Mammary epithelial cell (primary cell): ENCODE measurements at regions of chr7 and their contacts with region 1.

Region 1: DNA sequence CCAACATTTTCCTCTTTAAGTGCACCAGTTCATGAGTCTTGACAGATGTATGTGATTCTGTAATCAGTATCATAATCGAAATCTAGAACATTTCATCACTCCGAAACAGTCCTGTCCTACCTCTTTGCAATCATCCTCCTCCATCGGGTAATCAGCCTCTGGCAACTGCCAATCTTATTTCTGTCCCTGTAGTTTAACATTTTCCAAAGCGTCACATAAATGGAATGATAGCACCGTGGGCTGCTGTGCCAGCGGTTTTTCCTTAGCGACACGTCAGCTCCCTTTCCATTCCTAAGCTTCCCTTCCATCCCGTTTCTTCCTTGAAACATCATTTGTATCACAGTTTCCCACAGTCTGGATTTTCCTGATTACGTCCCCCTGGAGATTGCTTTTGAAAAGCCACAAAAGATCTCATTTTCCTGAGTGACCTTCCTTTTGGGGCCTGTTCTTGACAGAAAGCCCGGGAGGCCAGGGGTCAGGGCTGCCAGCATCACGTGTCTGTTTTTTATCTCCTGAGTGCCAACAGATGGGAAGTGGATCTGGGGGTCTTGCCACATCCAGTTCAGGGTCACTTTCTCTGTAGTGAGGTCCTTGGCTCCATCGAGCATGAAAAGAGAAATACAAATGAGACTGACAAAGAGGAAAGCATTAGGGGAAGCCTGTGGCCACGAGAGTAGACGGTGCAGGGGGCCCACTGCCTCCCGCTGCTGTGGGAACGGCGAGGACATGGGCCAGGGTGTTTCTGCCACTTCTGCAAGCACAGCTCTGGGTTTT is 31.6 kb downstream of the TMEM120A start:
- DNase-seq: no peak
- H3K4me3 ChIP-seq: no peak overlapping the region
- H3K27ac ChIP-seq: no peak overlapping the region
- H3K4me1 ChIP-seq: no peaks in the 10 kb centered on the region
- H3K27me3 ChIP-seq: no peaks in the 10 kb centered on the region
- CTCF ChIP-seq: no peak

Region 2: DNA sequence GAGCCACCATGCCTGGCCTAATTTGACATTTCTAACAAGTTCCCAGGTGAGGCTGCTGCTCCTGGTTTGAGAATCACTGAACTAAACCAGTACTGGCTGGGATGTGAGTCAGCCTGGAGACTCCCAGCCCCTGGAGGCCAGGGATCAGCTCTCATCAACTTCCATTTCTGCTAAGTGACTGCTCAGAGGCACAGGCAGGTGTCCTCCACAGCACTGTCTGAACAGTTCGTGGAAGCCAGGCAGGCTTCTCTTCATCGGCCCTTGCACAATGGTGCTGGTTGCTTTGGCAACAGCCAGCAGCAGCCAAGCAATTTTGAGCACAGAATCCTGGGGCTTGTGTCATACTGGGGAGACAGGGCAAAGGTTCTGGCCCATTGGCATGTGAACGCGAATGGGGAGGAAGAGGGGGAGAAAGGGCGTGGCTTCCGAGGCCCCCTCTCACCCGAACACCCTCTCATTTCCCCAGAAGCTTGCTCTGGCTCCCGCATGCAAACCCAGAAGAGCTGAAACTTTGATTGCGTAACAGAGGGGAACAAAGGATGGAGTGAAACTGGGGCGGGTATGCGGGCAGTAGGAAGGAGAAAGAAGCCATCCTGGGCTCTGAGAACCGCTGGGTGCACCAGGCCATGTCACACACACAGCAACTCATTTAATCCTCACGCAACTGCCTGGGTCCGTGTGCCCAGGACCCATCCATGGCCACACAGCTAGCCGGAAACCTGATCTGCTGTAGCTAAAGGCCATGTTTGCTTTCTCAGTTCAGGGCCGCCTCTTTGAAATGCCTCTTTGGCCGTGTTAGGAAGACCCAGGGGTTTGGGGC is 56.8 kb before region 1 on chr7:
- CTCF ChIA-PET with region 1: no interaction called
- dilution Hi-C with region 1: loop called (anchors 5 kb)
- in situ Hi-C with region 1: no loop called
- intact Hi-C with region 1: no loop called
- DNase-seq: peak; percentile 89
- H3K4me3 ChIP-seq: no peak overlapping the region
- H3K27ac ChIP-seq: no peak overlapping the region
- H3K4me1 ChIP-seq: no peaks in the 10 kb centered on the region
- H3K27me3 ChIP-seq: no peaks in the 10 kb centered on the region
- CTCF ChIP-seq: peak in 1 of 2 donors; percentile 13

Region 3: DNA sequence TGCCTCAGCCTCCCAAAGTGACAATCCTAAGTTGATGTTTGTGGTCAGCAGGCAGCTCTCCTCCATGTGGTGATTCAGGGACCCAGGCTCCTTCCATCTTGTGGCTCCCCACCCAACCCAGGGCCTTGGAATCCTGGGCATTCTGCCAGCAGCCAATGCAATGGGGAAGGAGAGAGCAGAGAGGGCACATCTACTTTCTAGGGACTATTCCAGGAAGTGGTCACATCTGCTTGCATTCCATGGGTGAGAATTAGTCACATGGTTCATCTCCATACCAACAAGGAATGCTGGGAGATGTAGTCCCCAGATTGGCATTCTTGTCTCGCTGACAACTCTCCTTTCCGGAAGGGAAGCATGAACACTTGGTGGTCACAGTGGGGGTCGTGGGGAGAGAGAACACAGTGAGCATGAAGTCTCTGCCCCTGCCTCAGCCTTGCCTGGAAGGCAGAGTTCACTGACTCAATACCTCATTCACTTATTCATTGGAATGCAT is 229.0 kb after region 1 on chr7:
- CTCF ChIA-PET with region 1: no interaction called
- dilution Hi-C with region 1: no loop called
- in situ Hi-C with region 1: no loop called
- intact Hi-C with region 1: no loop called
- DNase-seq: peak; percentile 32
- H3K4me3 ChIP-seq: no peak overlapping the region
- H3K27ac ChIP-seq: no peak overlapping the region
- H3K4me1 ChIP-seq: no peaks in the 10 kb centered on the region
- H3K27me3 ChIP-seq: no peaks in the 10 kb centered on the region
- CTCF ChIP-seq: no peak